Lower leg skin (tissue), 4 donors: ENCODE measurements at regions of chr2 and their contacts with region 1.

Region 1: DNA sequence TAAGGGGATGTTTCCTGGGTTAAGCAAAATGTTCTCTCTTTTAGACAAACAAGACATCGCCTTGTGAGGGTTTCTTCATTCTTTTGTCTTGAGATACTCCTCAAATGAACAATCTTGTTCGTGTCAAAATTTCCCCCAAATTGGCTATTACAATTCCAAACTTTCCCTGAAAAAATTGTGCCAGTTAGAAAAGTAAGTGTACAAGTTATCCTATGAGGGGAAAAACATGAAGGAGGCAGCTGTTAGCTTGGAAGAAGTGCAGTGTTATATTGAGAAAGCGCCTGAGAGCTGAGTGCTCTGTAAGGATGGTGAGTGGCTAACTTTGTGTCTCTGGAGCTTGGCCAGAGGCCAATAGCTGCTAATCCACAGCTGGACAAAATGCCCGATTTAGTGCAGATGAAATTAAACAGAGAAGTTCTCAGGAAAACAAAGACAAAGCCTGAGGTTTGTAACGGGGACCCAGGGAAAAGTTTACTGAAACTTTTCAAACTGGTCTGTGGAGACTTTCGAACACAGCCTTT is 14.1 kb upstream of the PLEKHH2 start:
- DNase-seq: no peak
- H3K4me3 ChIP-seq: no peak overlapping the region
- CTCF ChIP-seq: no peak
- POLR2A ChIP-seq: no peak

Region 2: DNA sequence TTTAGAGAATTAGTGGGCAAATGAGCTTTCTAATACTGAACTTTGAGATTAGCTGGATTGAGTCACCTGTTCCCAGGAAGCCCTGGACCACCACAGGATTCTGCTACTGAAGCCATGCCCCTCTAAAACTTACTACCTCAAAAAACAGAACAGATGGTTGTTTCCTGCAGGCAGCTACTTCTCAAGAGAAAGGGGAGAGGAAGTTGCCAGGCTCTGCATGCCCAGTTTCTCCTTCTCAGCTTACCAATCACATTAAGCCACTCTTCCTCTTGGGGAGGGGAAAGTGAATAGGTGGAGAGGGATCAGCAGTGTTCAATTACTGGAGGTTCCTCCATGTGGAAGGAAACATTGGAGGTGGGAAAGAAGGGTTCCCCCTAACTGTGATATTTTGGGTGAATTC is 78.1 kb after region 1 on chr2:
- intact Hi-C with region 1: loop called (anchors 2 kb)
- DNase-seq: no peak
- H3K4me3 ChIP-seq: no peak overlapping the region
- CTCF ChIP-seq: no peak
- POLR2A ChIP-seq: no peak